BJ (cell line): ENCODE measurements at regions of chr5 and their contacts with region 1.

Region 1: GRCh38 chr5:171963416-171963815 is 43.0 kb downstream of the FBXW11 start:
- DNase-seq: no peak
- H3K4me3 ChIP-seq: no peak overlapping the region
- H3K27me3 ChIP-seq: no peaks in the 10 kb centered on the region
- CTCF ChIP-seq: no peak

Region 2: GRCh38 chr5:171927345-171927941 is 36.0 kb before region 1 on chr5:
- CTCF ChIA-PET with region 1: no interaction called
- POLR2A ChIA-PET with region 1: interaction called, 18 read pairs
- DNase-seq: no peak
- H3K4me3 ChIP-seq: no peak overlapping the region
- H3K27me3 ChIP-seq: no peaks in the 10 kb centered on the region
- CTCF ChIP-seq: peak; percentile 43; the same call in 1 of the 2 replicates